ENCODE measurements at regions of chr10 and their contacts with region 1.

Region 1: GRCh38 chr10:35195361-35196306 is 69.0 kb downstream of the CREM start:
- DNase-seq: peak; percentile 73
- CTCF ChIP-seq: peak; percentile 67

Region 2: DNA sequence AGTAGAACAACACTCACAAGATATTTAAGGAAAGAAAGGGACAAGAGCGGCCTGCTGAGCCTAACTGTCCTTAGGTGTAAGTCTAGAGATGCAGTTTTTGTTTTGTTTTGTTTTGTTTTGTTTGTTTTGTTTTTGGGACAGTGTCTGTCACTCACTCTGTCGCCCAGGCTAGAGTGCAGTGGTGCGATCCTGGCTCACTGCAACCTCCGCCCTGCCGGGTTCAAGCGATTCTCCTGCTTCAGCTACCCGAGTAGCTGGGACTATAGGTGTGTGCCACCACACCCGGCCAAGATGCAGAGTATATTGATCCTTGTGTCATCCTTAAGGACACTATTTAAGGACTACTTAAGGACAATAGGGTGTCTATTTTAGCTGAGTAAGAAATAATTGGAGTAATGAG is 296.5 kb before region 1 on chr10:
- CTCF ChIA-PET with region 1: no interaction called
- POLR2A ChIA-PET with region 1: no interaction called
- DNase-seq: no peak
- CTCF ChIP-seq: no peak

Region 3: GRCh38 chr10:35126530-35127296 is 68.9 kb before region 1 on chr10 and contains the start of gene CREM:
- CTCF ChIA-PET with region 1: interaction called, 147 read pairs
- POLR2A ChIA-PET with region 1: interaction called, 37 read pairs
- DNase-seq: peak; percentile 96
- CTCF ChIP-seq: peak; percentile 75

Region 4: DNA sequence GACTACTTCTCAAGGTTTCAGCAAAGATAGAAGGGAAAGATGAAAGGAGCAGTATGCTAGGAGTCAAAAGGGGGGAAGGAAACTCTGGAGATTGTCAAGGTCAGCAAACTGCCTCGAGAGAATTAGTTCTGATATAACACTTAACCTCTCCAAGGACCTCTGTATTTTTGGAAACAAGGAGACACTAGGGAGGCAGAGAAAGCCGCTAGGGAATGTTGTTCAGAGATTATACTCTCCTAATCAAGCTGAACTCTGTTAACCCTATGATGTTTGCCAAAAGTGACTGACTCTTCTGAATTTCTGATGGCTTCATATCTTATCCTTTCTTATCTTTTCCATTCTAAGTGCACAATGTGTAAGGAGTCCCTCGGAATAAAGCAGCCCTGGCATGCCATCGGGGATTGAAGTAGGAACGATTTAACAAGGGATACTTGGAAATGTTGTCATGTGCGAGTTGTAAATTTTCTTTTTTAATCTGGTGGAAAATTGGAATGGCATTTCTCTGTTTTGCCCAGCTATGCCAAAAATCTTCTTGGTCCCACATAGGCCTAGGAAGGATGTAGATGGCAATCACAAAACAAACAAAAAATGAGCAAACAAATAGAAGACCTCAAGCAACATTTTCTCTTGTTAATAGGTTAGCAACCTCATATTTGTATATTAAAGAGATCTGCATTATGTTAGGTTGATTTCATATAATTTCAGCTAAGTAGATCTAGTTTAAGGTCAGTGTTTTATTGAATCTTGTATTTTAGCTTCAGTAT is 41.7 kb before region 1 on chr10:
- CTCF ChIA-PET with region 1: interaction called, 22 read pairs
- POLR2A ChIA-PET with region 1: interaction called, 15 read pairs
- DNase-seq: no peak
- CTCF ChIP-seq: no peak

Region 5: DNA sequence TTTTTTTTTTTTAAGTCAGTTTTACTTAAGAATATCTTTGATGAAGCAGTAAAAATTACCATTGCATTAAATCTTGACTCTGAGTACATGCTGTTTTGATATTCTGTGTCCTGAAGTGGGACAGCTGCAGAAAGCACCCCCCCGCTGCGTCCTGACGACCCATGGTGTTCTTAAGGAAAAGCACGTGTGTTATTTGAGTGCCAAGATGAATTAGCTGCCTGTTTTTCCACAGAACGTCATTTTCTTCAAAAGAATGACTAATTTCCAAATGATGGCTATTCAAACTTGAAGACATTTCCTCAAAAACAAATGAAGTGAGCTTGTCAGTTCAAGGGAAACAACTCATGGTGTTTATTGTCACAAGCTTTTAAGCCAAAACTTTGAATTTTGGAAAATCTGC is 23.1 kb before region 1 on chr10:
- CTCF ChIA-PET with region 1: interaction called, 20 read pairs
- POLR2A ChIA-PET with region 1: no interaction called
- DNase-seq: no peak
- CTCF ChIP-seq: no peak

Region 6: DNA sequence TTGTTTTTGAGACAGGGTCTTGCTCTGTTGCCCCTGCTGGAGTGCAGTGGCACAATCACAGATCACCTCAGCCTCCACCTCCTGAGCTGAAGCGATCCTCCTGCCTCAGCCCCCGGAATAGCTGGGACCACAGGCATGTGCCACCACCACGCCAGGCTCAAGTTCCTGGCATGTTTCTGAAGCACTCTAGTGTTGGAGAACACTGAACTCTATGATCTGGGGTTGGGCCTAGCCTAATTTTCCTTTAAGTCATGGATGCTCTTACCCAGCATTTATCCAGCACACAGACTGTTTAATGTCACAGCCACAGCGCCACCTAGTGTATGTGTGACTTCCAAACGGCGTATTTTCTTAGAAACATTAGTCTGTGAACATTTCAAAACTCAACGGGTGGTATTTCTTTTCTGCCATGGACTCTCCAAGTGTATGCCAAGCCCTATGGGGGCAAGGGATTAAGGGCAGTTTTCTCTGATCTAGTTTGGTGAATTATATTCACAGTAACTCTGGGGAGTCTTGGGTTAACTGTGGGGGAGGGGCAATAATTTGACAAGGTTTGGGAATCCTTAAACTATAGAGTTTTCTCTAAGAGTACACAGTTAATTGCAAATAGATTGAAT is 22.8 kb after region 1 on chr10:
- CTCF ChIA-PET with region 1: interaction called, 208 read pairs
- POLR2A ChIA-PET with region 1: interaction called, 5 read pairs
- DNase-seq: peak; percentile 74
- CTCF ChIP-seq: peak; percentile 70